Naive thymus-derived CD4-positive, alpha-beta T cell (primary cell): ENCODE measurements at regions of chr4 and their contacts with region 1.

Region 1: DNA sequence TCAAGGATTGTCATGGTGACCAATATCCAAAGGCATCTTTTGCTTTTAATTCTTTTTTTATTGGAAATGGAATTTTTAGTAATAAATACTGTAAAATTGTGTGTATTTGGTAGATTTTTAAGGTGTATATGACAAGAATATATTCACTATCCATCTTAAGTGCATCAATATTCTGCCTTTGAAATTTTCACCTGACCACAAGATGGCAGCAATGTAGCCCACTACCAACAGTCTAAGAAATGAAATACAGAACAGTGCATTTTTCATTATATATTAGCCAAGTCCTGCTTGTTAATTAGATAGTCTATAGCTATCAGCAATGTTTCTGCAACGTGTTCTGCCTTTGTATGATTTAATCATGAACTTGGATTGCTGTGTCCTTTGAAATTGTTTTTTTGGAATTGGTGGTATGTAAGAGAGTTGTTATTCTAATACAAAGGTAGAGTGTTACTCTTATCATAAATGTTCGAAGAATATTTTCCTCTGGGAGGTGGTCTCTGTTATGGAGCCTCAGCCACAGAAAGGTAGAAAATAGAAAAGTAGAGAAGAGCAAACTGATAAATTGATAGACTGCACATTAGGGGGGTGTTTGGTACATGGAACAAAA is 38.2 kb downstream of the HPGDS start:
- DNase-seq: peak in 4 of 9 donors; percentile 7 to 14 (median 11)
- ATAC-seq: no peak
- H3K4me3 ChIP-seq: no peak overlapping the region
- H3K4me3 Mint-ChIP-seq: no peak overlapping the region
- H3K27ac ChIP-seq: no peak overlapping the region
- H3K27ac Mint-ChIP-seq: no peak overlapping the region
- H3K4me1 ChIP-seq: no peaks in the 10 kb centered on the region
- H3K4me1 Mint-ChIP-seq: no peaks in the 10 kb centered on the region
- H3K27me3 ChIP-seq: no peaks in the 10 kb centered on the region
- H3K27me3 Mint-ChIP-seq: no peaks in the 10 kb centered on the region

Region 2: GRCh38 chr4:94390804-94391410 is 86.4 kb after region 1 on chr4:
- CTCF ChIA-PET with region 1: no interaction called
- POLR2A ChIA-PET with region 1: no interaction called
- intact Hi-C with region 1: loop called (anchors 1 kb)
- DNase-seq: peak in 4 of 9 donors; percentile 6 to 32 (median 11)
- ATAC-seq: no peak
- H3K4me3 ChIP-seq: no peak overlapping the region
- H3K4me3 Mint-ChIP-seq: no peak overlapping the region
- H3K27ac ChIP-seq: no peak overlapping the region
- H3K27ac Mint-ChIP-seq: no peak overlapping the region
- H3K4me1 ChIP-seq: no peaks in the 10 kb centered on the region
- H3K4me1 Mint-ChIP-seq: peaks cover 0 to 3% (median 0%) of the 10 kb centered on the region in 7 donors
- H3K27me3 ChIP-seq: no peaks in the 10 kb centered on the region
- H3K27me3 Mint-ChIP-seq: peaks cover 0 to 15% (median 6%) of the 10 kb centered on the region in 5 donors

Region 3: GRCh38 chr4:94595879-94596483 is 291.5 kb after region 1 on chr4:
- CTCF ChIA-PET with region 1: interaction called, 3 read pairs
- POLR2A ChIA-PET with region 1: no interaction called
- intact Hi-C with region 1: loop called (anchors 1 kb)
- DNase-seq: peak in 5 of 9 donors; percentile 26 to 41 (median 31)
- ATAC-seq: peak; percentile 65
- H3K4me3 ChIP-seq: no peak overlapping the region
- H3K4me3 Mint-ChIP-seq: no peak overlapping the region
- H3K27ac ChIP-seq: no peak overlapping the region
- H3K27ac Mint-ChIP-seq: no peak overlapping the region
- H3K4me1 ChIP-seq: no peaks in the 10 kb centered on the region
- H3K4me1 Mint-ChIP-seq: no peaks in the 10 kb centered on the region
- H3K27me3 ChIP-seq: no peaks in the 10 kb centered on the region
- H3K27me3 Mint-ChIP-seq: no peaks in the 10 kb centered on the region